H1 (cell line): ENCODE measurements at regions of chr1 and their contacts with region 1.

Region 1: GRCh38 chr1:11478571-11479374 is at the start of gene DISP3:
- DNase-seq: peak; percentile 56 to 96
- H3K4me3 ChIP-seq: peak within 1 kb of the TSS; percentile 63 to 75 (median 70)
- H3K27ac ChIP-seq: peak within 1 kb of the TSS; percentile 99
- H3K4me1 ChIP-seq: peaks cover 0 to 4% (median 0%) of the 10 kb centered on the region in 4 experiments; a peak in 2 of 7 replicates
- H3K27me3 ChIP-seq: peaks cover 3 to 26% (median 24%) of the 10 kb centered on the region in 4 experiments
- CTCF ChIP-seq: peak; percentile 68 to 75 (median 73)
- EP300 ChIP-seq: peak in 1 of 2 experiments; percentile 99; a peak in 2 of 3 replicates
- POLR2A ChIP-seq: peak in 1 of 2 experiments; percentile 96; a peak in 2 of 3 replicates
- RAD21 ChIP-seq: peak; percentile 46 to 65
- total RNA-seq, gene DISP3: 4.6 and 5.3 TPM in 2 replicates

Region 2: DNA sequence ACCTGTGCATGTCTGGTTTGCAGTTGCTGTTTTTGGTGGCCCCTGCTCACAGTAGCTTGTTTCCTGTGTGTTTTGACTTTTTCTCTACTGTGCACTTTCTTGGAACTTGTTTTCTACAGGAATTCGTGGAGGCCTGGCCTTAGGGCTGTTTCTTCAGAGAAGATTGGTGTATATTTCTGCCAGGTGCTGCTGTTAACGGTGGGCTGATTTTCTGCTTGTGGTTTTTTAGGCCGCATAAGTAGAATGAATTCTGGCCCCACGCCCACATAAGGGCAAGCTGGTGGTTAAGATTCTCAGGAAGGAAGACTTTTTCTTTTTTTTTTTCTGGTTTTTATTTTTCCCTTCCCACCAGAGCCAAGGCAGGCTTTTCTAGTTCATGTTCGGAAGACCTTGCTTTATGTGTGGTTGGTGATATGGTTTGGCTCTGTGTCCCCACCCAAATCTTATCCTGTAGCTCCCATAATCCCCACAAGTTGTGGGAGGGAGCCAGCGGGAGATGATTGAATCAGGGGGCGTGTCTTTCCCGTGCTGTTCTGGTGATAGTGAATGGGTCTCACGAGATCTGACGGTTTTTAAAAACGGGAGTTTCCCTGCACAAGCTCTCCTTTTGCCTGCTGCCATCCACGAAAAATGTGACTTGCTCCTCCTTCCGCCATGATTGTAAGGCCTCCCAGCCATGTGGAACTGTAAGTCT is 71.3 kb before region 1 on chr1:
- CTCF ChIA-PET with region 1: no interaction called
- POLR2A ChIA-PET with region 1: no interaction called
- DNase-seq: no peak
- H3K4me3 ChIP-seq: no peak overlapping the region
- H3K27ac ChIP-seq: no peak overlapping the region
- H3K4me1 ChIP-seq: peaks cover 0 to under 1% (median 0%) of the 10 kb centered on the region in 4 experiments; a peak in 1 of 7 replicates
- H3K27me3 ChIP-seq: no peaks in the 10 kb centered on the region
- CTCF ChIP-seq: no peak
- EP300 ChIP-seq: no peak
- POLR2A ChIP-seq: no peak
- RAD21 ChIP-seq: no peak

Region 3: DNA sequence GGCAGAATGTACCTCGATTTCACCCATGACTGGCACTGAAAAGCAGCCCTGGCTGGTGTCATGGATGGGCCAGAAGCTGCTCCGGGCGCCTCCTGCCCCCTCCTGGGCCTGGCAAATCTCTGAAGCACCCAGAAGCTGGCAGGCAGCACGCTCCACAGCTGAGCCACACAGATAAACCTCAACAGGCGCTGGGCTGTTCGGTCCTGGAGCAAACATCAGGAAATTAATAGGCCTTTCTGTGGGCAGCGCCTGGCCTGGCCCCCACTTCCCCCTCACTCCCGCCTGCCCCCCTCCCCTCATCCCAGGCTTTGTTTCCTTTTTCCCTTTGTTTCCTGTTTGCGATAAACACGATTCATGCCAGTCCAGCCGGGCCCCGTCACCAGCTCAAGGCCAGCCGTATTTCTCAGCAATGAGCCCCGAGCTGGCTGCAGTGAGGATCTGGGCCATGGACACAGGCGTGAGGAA is 19.9 kb before region 1 on chr1:
- CTCF ChIA-PET with region 1: interaction called, 13 read pairs
- POLR2A ChIA-PET with region 1: interaction called, 4 read pairs
- DNase-seq: no peak
- H3K4me3 ChIP-seq: no peak overlapping the region
- H3K27ac ChIP-seq: no peak overlapping the region
- H3K4me1 ChIP-seq: peaks cover 0 to 2% (median 0%) of the 10 kb centered on the region in 4 experiments; a peak in 1 of 7 replicates
- H3K27me3 ChIP-seq: no peaks in the 10 kb centered on the region; a peak in 1 of 7 replicates
- CTCF ChIP-seq: no peak
- EP300 ChIP-seq: no peak
- POLR2A ChIP-seq: no peak
- RAD21 ChIP-seq: no peak; a peak in 1 of 4 replicates

Region 4: DNA sequence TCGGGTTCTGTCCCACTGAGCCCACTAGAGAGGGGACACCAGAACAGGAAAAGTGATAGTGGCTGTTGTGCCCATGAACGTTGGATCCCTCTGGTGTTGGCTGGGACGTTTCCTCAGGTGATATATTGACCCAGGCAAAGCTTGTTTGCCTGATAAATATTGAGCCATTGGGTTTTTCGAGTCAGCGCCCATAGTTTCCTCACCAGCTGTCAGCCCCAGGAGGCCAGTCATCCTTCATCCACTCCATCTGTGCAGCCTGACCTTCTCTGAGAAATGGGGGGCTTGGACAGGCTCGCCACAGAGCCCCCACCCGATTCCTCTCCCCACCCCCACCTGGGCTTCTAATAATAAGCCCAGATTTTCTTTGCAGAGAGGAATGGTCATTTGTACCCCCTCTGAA is 13.5 kb after region 1 on chr1:
- CTCF ChIA-PET with region 1: interaction called, 42 read pairs
- POLR2A ChIA-PET with region 1: interaction called, 17 read pairs
- DNase-seq: no peak
- H3K4me3 ChIP-seq: no peak overlapping the region
- H3K27ac ChIP-seq: no peak overlapping the region
- H3K4me1 ChIP-seq: peaks cover 2 to 7% (median 3%) of the 10 kb centered on the region in 4 experiments; a peak in 6 of 7 replicates
- H3K27me3 ChIP-seq: no peaks in the 10 kb centered on the region
- CTCF ChIP-seq: no peak
- EP300 ChIP-seq: no peak
- POLR2A ChIP-seq: no peak
- RAD21 ChIP-seq: no peak

Region 5: DNA sequence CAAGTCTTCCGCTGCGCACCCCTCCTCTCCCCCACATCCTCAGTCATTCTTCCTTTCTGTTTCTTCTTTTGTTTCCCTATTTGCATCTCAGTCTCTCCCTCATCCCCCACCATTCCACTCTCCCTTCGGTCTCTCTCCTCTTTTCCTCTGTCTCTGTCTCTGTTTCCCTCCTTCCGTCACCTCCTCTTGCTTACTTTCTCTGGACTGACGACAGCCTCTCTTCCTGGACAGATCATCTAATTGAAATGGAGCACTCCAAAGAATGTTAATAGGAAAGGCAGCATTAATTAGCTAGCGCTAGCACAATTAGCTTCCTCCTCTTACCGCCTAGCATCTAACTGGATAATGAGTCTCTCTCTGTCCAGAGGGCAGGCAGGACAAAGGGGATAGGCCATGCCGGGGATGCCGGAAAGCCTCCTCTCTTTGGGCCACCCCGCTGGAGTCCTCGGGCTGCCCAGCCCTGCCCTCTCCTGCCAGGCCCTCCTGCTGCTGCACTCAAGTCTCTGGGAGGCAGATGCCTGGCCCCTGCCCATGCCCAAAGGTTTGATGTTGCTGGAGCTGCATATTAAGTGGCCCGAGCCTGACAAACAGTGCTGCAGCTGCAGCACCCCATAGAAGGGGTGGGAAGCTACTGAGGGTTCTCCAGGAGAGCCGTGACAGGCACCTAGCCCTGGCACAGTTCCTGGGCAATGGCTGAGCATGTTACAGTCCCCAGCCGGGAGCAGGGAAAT is 21.0 kb after region 1 on chr1:
- CTCF ChIA-PET with region 1: interaction called, 42 read pairs
- POLR2A ChIA-PET with region 1: interaction called, 9 read pairs
- DNase-seq: peak in 1 of 2 experiments; percentile 67
- H3K4me3 ChIP-seq: peak overlapping the region in 2 of 4 experiments; percentile 7 to 40; a peak in 5 of 8 replicates
- H3K27ac ChIP-seq: peak overlapping the region; percentile 5; the same call in 1 of the 2 replicates
- H3K4me1 ChIP-seq: peaks cover 12 to 32% (median 21%) of the 10 kb centered on the region in 4 experiments
- H3K27me3 ChIP-seq: no peaks in the 10 kb centered on the region
- CTCF ChIP-seq: no peak
- EP300 ChIP-seq: no peak
- POLR2A ChIP-seq: peak in 1 of 2 experiments; percentile 50; a peak in 2 of 3 replicates
- RAD21 ChIP-seq: no peak

Region 6: GRCh38 chr1:11634365-11635192 is 155.8 kb after region 1 on chr1:
- CTCF ChIA-PET with region 1: interaction called, 14 read pairs
- POLR2A ChIA-PET with region 1: interaction called, 8 read pairs
- DNase-seq: no peak
- H3K4me3 ChIP-seq: no peak overlapping the region
- H3K27ac ChIP-seq: no peak overlapping the region
- H3K4me1 ChIP-seq: no peaks in the 10 kb centered on the region
- H3K27me3 ChIP-seq: no peaks in the 10 kb centered on the region; a peak in 1 of 7 replicates
- CTCF ChIP-seq: no peak
- EP300 ChIP-seq: no peak
- POLR2A ChIP-seq: no peak
- RAD21 ChIP-seq: no peak